Motor neuron (in vitro differentiated cells): ENCODE measurements at regions of chr12 and their contacts with region 1.

Region 1: DNA sequence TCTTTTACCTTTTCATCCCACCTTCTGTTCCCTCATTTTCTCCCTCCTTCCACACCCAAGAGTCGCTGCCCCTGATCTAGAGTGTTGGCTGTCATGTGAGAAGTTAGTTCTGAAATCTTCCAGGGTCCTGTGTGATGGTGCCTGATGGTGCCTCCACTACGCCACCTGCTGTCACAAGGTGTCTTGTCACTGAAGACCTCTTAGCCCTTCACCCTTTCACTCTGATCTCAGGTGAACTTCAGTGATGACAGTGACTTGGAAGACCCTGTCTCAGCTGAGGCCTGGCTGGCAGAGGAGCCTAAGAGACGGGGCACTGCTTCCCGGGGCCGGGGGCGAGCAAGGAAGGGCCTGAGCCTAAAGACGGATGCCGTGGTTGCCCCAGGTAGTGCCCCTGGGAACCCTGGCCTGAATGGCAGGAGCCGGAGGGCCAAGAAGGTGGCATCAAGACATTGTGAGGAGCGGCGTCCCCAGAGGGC is 7.6 kb upstream of the PFDN5 start:
- ATAC-seq: peak; percentile 85 to 97 (median 90)
- H3K4me3 ChIP-seq: no peak overlapping the region
- H3K27ac ChIP-seq: no peak overlapping the region
- H3K4me1 ChIP-seq: peaks cover 0 to 3% of the 10 kb centered on the region in 2 donors

Region 2: GRCh38 chr12:53213348-53213747 is 74.4 kb before region 1 on chr12:
- in situ Hi-C with region 1: loop called in 2 of 9 experiments (anchors 10 kb)
- ATAC-seq: peak; percentile 56 to 98 (median 96)
- H3K4me3 ChIP-seq: no peak overlapping the region
- H3K27ac ChIP-seq: no peak overlapping the region
- H3K4me1 ChIP-seq: peaks cover 4 to 20% of the 10 kb centered on the region in 2 donors

Region 3: GRCh38 chr12:53856132-53856531 is 568.4 kb after region 1 on chr12:
- in situ Hi-C with region 1: no loop called
- ATAC-seq: no peak
- H3K4me3 ChIP-seq: no peak overlapping the region
- H3K27ac ChIP-seq: no peak overlapping the region
- H3K4me1 ChIP-seq: no peaks in the 10 kb centered on the region